ENCODE measurements at regions of chr11 and their contacts with region 1.

Region 1: GRCh38 chr11:124837491-124837856 is 27.8 kb upstream of the ROBO3 start:
- DNase-seq: peak; percentile 82
- H3K4me3 ChIP-seq: peak overlapping the region; percentile 52
- H3K27ac ChIP-seq: peak overlapping the region; percentile 70
- H3K4me1 ChIP-seq: peaks cover 30% of the 10 kb centered on the region
- CTCF ChIP-seq: peak; percentile 72

Region 2: GRCh38 chr11:124644426-124645280 is 192.8 kb before region 1 on chr11:
- CTCF ChIA-PET with region 1: interaction called, 3 read pairs
- POLR2A ChIA-PET with region 1: interaction called, 3 read pairs
- intact Hi-C with region 1: loop called (anchors 1 kb)
- DNase-seq: peak; percentile 51
- H3K4me3 ChIP-seq: no peak overlapping the region
- H3K27ac ChIP-seq: no peak overlapping the region
- H3K4me1 ChIP-seq: peaks cover 8% of the 10 kb centered on the region
- CTCF ChIP-seq: peak; percentile 94

Region 3: GRCh38 chr11:124673333-124674167 is 163.9 kb before region 1 on chr11 and contains the starts of genes SIAE and SPA17:
- CTCF ChIA-PET with region 1: interaction called, 4 read pairs
- POLR2A ChIA-PET with region 1: interaction called, 7 read pairs
- intact Hi-C with region 1: loop called (anchors 1 kb)
- DNase-seq: peak; percentile 93
- H3K4me3 ChIP-seq: peak within 1 kb of the TSS; percentile 79
- H3K27ac ChIP-seq: peak within 1 kb of the TSS; percentile 30
- H3K4me1 ChIP-seq: peaks cover 45% of the 10 kb centered on the region
- CTCF ChIP-seq: no peak
- total RNA-seq, gene SIAE: 2.6 and 4.8 TPM in 2 replicates
- total RNA-seq, gene SPA17: 2.4 and 5.1 TPM in 2 replicates

Region 4: GRCh38 chr11:124746621-124747243 is 90.7 kb before region 1 on chr11:
- CTCF ChIA-PET with region 1: no interaction called
- POLR2A ChIA-PET with region 1: interaction called, 4 read pairs
- intact Hi-C with region 1: loop called (anchors 5 kb)
- DNase-seq: peak; percentile 90
- H3K4me3 ChIP-seq: peak overlapping the region; percentile 70
- H3K27ac ChIP-seq: peak overlapping the region; percentile 61
- H3K4me1 ChIP-seq: peaks cover 23% of the 10 kb centered on the region
- CTCF ChIP-seq: peak; percentile 84

Region 5: DNA sequence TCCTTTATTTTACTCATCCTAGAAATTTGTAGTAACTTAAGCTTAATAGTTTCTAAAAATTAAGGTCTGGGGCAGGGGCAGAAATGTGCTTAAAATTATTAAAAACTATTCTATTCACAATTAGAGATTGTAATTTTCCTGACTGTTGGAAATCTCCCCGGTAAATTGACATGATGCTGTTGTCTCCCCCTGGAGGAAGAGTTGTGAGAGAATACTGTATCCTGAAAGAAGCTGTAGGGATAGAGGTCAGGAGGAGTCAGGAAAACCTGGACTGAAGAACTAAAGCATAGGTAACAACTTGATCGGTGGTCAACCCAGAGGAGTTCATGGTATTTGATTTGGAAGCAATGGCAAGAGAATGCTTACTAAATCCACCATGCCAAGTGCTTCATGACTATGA is 59.2 kb before region 1 on chr11:
- CTCF ChIA-PET with region 1: no interaction called
- POLR2A ChIA-PET with region 1: no interaction called
- intact Hi-C with region 1: no loop called
- DNase-seq: no peak
- H3K4me3 ChIP-seq: no peak overlapping the region
- H3K27ac ChIP-seq: no peak overlapping the region
- H3K4me1 ChIP-seq: peaks cover 7% of the 10 kb centered on the region
- CTCF ChIP-seq: peak; percentile 42

Region 6: GRCh38 chr11:124800226-124800929 is 37.1 kb before region 1 on chr11 and contains the start of gene MSANTD2:
- CTCF ChIA-PET with region 1: no interaction called
- POLR2A ChIA-PET with region 1: interaction called, 11 read pairs
- intact Hi-C with region 1: loop called (anchors 2 kb)
- DNase-seq: peak; percentile 81
- H3K4me3 ChIP-seq: peak within 1 kb of the TSS; percentile 94
- H3K27ac ChIP-seq: peak within 1 kb of the TSS; percentile 83
- H3K4me1 ChIP-seq: peaks cover 37% of the 10 kb centered on the region
- CTCF ChIP-seq: peak; percentile 17; the same call in 1 of the 2 replicates
- total RNA-seq, gene MSANTD2: 17.7 and 22.1 TPM in 2 replicates

Region 7: GRCh38 chr11:125141686-125142535 is 304.4 kb after region 1 on chr11:
- CTCF ChIA-PET with region 1: no interaction called
- POLR2A ChIA-PET with region 1: no interaction called
- intact Hi-C with region 1: loop called (anchors 5 kb)
- DNase-seq: peak; percentile 49
- H3K4me3 ChIP-seq: no peak overlapping the region
- H3K27ac ChIP-seq: no peak overlapping the region
- H3K4me1 ChIP-seq: peaks cover 4% of the 10 kb centered on the region
- CTCF ChIP-seq: peak; percentile 98